ENCODE measurements at regions of chr6 and their contacts with region 1.

Region 1: DNA sequence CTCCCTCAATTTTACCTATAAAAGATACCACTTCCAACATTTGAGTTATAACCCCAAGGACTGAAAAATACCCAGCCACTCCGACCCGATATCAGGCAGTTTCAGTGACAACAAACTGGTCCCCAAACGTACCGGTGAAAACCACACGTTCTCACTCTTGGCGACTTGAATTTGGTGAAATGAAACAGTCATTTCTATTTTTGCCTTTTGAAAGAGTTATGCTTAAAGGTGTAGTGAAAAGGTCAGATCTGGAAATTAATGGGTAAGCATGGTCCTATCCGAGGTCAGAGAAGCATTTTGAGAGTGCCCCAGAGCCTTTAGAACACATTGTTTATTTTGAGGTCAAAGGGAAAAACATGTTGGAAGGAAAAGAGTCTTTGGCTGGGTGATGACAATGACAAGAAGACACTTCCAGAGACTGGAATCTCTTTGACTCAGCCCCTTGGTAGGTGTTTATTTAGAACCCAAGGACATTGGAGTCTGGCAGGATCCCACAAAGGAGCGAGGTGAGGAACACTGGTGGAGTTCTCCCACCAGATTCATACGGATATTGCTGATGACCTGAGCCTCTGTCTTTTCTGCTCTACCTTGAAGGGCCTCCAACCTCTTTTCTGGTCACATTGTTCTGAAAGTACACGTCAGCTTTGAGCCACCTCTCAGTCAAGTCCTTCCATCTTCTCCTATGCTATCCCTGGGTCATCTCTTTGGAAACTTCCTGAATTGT is 235.0 kb downstream of the GMPR start:
- DNase-seq: peak; percentile 14
- H3K4me3 Mint-ChIP-seq: peak overlapping the region; percentile 66
- H3K27ac Mint-ChIP-seq: peak overlapping the region; percentile 93
- H3K4me1 Mint-ChIP-seq: peaks cover 82% of the 10 kb centered on the region
- H3K27me3 Mint-ChIP-seq: no peaks in the 10 kb centered on the region

Region 2: DNA sequence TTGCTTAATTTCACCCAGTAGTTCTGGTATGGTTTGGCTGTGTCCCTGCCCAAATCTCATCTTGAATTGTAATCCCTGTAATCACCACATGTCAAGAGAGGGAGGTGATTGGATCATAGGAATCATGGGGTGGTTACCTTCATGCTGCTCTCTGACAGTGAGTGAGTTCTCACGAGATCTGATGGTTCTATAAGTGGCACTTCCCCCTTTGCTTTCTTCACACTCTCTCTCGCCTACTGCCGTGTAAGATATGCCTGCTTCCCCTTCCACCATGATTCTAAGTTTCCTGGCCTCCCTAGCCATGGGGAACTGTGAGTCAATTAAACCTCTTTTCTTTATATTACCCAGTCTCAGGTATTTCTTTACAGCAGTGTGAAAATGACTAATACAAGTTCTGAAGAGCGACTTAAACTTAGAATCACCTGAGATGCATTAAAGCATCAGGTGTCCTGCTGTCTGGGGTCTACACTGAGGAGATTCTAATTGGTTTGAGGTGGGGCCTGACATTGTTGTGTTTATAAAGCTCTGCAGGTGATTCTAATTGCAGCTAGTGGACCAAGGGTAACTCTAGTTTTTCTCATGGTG is 728.4 kb before region 1 on chr6:
- intact Hi-C with region 1: no loop called
- DNase-seq: no peak
- H3K4me3 Mint-ChIP-seq: no peak overlapping the region
- H3K27ac Mint-ChIP-seq: no peak overlapping the region
- H3K4me1 Mint-ChIP-seq: no peaks in the 10 kb centered on the region
- H3K27me3 Mint-ChIP-seq: no peaks in the 10 kb centered on the region

Region 3: DNA sequence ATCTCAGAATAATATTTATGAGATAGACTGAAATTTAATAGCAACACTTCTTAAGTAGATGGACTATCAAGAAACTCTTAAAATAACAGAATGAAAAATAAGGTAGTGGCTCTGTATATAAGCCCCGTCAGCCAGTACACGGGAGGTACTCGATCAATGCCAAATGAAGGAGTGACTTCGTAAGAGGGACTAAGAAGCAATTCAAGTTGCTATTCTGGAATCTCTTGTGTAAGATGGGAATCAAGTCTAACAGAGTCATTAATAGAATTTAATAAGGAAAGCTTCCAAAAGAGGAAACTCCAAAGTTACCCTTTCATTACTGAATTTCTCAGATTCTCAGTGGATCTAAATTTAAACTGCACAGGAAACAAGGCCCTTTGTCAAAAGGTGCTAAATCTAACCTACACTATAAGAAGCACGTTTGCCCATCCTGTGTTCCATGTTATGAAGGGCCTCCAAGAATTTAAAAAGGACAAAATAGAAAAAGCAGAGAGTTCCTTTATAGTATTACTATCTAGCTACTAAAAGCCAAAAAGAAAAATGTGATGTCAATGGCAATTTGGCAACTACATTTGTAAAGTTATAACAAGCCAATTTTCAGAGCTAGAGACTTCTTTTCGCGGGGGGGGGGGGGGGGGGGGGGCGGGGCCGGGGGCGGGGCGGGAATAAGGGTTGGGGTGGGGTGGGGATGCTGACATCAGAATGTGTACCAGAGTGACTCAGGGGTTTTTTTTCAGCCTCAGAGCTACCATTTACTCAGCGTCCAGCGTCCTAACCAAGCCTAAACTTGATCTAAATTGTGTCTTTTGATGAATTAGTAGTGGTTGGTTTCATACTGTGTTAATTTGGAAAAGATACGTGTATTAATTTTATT is 34.4 kb before region 1 on chr6:
- intact Hi-C with region 1: loop called (anchors 1 kb)
- DNase-seq: no peak
- H3K4me3 Mint-ChIP-seq: peak overlapping the region; percentile 51
- H3K27ac Mint-ChIP-seq: peak overlapping the region; percentile 79
- H3K4me1 Mint-ChIP-seq: peaks cover 81% of the 10 kb centered on the region
- H3K27me3 Mint-ChIP-seq: no peaks in the 10 kb centered on the region

Region 4: DNA sequence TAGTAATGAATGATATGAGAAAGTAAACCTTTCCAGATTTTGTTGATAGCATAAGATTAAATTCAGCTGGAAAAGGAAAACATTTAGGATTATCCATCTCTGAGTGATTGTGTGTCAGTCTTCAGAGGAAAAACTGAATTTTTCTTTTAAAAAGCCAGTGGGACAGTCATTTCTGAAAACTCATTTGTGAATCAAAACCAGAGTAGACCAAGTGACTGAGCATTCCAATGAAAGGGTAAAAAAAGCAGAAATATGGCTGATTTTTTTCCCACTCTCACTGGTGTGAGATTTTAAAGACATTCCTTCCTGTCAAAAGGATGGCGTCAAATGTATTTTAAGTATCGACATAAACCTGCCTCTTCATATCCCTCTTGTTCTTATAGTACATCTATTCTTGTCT is 21.0 kb before region 1 on chr6:
- intact Hi-C with region 1: loop called (anchors 1 kb)
- DNase-seq: no peak
- H3K4me3 Mint-ChIP-seq: no peak overlapping the region
- H3K27ac Mint-ChIP-seq: no peak overlapping the region
- H3K4me1 Mint-ChIP-seq: peaks cover 37% of the 10 kb centered on the region
- H3K27me3 Mint-ChIP-seq: no peaks in the 10 kb centered on the region

Region 5: DNA sequence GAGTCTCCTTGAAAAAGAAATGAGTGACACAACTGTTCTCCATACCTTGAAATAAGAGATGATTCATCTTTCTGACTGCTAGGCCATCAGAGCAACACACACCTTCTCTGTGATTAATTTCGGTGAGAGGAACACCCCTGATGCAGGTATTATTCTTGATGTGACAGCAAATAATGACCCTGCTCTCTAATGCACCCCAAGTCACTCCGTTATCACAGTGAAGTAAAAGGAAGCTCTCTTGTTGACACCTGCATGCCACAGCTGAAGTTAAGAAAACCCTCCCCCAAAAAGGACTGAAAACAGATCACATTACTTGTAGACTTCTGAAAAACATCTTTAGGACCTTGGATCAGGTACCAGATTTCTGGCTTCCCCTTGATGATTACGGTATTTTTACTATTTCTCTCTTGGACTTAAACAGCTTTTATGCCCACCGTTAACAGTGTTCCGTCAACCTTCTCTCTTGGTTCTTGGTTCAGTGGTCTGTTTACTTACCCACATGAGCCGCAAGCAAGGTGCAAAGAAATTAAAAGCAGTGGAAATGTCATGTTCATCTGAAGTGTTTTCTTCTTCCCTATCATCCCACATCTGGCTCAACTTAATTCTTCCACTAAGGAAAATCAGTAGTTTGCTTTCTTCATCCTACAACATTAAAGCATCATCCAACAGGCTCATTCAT is 14.8 kb after region 1 on chr6:
- intact Hi-C with region 1: no loop called
- DNase-seq: no peak
- H3K4me3 Mint-ChIP-seq: peak overlapping the region; percentile 25
- H3K27ac Mint-ChIP-seq: peak overlapping the region; percentile 32
- H3K4me1 Mint-ChIP-seq: peaks cover 90% of the 10 kb centered on the region
- H3K27me3 Mint-ChIP-seq: no peaks in the 10 kb centered on the region

Region 6: DNA sequence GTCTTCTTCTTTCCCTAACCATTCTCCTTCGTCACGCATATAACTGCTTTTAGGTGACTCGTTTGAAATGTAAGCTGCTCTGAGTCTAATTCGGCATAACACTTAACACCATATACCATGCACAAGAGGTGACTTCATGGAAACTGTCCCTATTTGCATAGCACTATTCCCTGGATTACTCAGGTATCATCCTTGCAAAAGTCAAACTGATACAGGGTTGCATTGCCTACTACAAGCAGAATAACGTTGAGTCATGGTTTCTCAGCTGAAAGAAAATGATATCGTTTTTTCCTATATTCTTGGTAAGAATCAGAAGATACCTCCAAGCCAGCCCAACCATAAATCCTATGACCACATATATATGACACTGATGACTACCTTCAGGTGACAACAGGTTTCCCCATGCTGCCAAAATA is 60.4 kb after region 1 on chr6:
- intact Hi-C with region 1: loop called (anchors 1 kb)
- DNase-seq: no peak
- H3K4me3 Mint-ChIP-seq: no peak overlapping the region
- H3K27ac Mint-ChIP-seq: peak overlapping the region; percentile 83
- H3K4me1 Mint-ChIP-seq: peaks cover 45% of the 10 kb centered on the region
- H3K27me3 Mint-ChIP-seq: no peaks in the 10 kb centered on the region

Region 7: GRCh38 chr6:16684896-16685554 is 211.7 kb after region 1 on chr6:
- intact Hi-C with region 1: loop called (anchors 1 kb)
- DNase-seq: peak; percentile 71
- H3K4me3 Mint-ChIP-seq: peak overlapping the region; percentile 43
- H3K27ac Mint-ChIP-seq: peak overlapping the region; percentile 88
- H3K4me1 Mint-ChIP-seq: peaks cover 97% of the 10 kb centered on the region
- H3K27me3 Mint-ChIP-seq: no peaks in the 10 kb centered on the region

Region 8: DNA sequence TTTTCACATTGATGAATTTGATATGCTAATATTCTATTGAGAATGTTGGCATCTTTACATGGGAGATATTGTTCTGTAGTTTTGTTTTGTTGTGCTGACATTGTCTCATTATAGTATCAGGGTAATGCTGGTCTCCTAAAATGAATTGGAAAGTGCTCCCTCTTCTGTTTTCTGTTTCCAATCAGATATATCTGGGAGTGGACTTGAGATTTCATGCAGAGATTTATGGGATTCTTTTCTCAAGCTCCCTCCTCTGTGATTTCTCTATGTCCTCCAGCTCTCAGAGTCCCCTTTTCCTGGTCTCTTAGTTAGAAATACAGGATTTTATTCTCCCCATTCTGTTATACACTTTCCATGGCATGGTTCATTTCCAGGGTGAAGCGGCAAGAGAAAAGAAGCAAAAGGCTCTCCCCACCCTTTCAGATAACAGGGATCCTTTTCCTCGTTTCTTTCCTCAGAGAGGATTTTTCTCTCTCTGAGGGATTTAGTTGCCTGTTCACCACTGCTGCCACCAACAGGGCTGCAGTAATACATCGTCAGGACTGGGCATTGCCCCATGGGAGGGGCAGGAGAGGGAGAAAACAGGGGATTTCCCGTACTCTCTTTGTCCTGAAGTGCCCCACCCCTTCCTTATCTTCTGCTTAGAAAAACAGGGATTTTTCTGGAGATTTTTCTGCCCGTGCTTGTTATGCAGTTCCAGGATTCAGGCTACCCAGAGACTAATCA is 569.2 kb after region 1 on chr6:
- intact Hi-C with region 1: no loop called
- DNase-seq: no peak
- H3K4me3 Mint-ChIP-seq: no peak overlapping the region
- H3K27ac Mint-ChIP-seq: no peak overlapping the region
- H3K4me1 Mint-ChIP-seq: no peaks in the 10 kb centered on the region
- H3K27me3 Mint-ChIP-seq: peaks cover 12% of the 10 kb centered on the region

Measured in activated T-helper 1 cell treated with anti-CD3 and anti-CD28 coated beads, Interleukin-12 subunit alpha, Interleukin-12 subunit beta, Interleukin-2, Interleukin-4 antibody, amounts not matched to agents 30 ng/mL and 10 ng/mL and 1 ng/mL, durations not matched to agents 14 hours and 24 hours and 36 hours (primary cell).